Right ventricle myocardium inferior (tissue), 1 donor: ENCODE measurements at regions of chr15 and their contacts with region 1.

Region 1: DNA sequence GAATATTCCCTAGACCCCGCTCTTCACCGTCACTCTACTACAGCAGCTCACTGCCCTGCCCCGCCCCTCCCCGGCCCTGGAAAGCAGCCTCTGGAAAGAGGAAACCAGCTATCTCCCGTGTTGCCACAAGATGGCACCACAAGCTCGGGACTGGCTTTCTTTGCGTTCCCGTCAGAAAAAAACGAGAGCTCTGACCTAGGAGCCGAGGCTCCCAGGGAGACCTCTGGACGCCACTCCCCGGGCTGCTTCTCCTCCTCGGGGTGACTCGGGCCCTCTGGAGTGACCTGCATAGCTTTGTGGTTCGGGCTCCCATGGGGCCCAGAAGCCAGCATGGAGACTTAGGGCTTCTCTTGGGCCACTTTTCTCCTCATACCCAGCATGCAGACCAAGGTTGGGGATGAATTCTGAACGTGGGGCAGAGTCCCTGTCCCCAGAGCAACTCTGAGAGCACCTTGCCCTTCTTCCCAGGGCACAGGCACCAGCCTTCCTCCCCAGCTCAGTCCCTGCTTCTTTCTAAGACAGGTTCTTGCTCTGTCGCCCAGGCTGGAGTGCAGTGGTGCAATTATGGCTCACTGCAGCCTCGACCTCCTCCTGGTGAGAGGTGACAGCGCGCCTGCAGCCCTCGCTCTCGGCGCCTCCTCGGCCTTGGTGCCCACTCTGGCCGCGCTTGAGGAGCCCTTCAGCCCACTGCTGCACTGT is 19.0 kb downstream of the STOML1 start:
- DNase-seq: peak; percentile 89
- ATAC-seq: peak; percentile 92

Region 2: GRCh38 chr15:74036271-74037170 is 63.4 kb after region 1 on chr15:
- intact Hi-C with region 1: loop called (anchors 2 kb)
- DNase-seq: peak; percentile 73
- ATAC-seq: no peak

Region 3: GRCh38 chr15:74134387-74135027 is 161.4 kb after region 1 on chr15:
- intact Hi-C with region 1: loop called (anchors 10 kb)
- DNase-seq: no peak
- ATAC-seq: no peak

Region 4: DNA sequence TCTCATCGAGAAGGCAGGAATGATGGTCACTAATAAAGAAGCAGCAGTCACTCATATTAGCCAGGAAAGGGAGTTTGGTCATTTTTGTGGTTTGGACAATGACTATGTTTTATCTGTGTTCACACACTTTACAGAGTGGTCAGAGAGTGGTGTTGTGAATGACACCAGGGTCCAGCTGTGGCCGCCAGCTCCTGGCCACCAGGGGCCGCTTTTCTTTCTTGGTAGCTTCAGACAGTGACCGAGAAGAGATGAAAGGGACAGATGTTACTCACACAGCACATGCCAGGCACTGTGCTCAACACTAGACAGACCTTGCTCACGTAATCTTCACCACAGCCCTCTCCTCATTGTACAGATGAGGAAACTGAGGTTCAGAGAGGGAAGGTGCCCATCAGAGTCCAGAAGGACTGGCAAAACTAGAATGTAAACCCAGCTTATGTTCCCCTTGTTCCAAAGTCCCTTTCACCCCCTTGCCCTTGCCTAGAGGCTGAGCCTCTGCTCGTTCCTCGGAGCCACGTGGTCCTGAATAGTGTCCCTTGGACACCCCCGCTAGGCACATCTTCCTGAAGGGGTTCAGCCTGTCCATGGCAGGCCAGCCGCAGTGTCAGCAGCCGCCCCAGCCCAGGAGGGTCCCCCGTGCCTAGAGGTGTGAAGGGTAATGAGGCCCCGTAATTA is 338.7 kb after region 1 on chr15:
- intact Hi-C with region 1: loop called (anchors 10 kb)
- DNase-seq: peak; percentile 50
- ATAC-seq: no peak